Prostate gland (tissue), 2 donors: ENCODE measurements at regions of chr13 and their contacts with region 1.

Region 1: DNA sequence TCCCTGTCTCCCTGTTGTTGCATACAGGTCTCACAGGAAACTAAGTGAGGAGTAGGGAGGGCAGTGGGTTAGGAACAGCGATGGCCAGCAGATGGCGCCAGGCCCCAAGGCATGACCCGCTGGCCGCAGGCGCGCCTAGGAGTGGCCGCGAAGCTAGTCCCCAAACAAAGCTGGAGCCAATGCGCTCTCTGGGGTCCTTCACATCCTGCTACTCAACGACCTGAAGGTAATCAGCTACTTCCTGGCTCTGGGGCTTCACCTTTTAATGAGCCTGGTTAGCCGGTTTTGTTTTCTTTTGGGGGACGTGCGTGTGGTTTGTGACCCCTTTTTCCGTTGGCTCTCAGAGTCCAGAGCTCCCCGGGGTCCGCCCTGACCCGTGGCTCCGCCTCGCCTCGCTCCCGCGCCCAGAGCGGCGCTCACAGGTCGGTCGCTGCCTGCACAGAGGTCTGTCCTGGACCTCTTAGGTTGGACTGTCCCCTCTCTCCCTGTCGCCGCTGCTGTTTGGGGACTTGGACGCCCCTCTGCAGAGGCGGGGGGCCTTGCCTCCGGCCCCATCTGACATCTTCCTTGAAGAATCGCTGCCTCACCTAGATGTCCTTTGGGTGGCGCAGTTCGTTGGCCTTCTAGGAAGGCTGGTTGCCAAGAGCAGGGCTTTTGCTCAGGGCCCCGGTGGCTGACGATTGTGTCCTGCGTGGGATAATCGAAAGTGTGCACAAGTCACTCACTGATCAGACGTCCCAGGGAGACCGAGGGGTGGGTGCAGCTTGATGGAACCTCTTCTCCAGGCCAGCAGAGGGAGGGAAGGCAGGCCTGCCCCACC is 62.1 kb upstream of the GTF3A start:
- DNase-seq: peak; percentile 73
- H3K4me3 ChIP-seq: peak overlapping the region; percentile 16
- H3K27ac ChIP-seq: no peak overlapping the region
- H3K4me1 ChIP-seq: no peaks in the 10 kb centered on the region
- H3K27me3 ChIP-seq: no peaks in the 10 kb centered on the region
- CTCF ChIP-seq: peak; percentile 71 to 91 (median 79)
- POLR2A ChIP-seq: no peak

Region 2: DNA sequence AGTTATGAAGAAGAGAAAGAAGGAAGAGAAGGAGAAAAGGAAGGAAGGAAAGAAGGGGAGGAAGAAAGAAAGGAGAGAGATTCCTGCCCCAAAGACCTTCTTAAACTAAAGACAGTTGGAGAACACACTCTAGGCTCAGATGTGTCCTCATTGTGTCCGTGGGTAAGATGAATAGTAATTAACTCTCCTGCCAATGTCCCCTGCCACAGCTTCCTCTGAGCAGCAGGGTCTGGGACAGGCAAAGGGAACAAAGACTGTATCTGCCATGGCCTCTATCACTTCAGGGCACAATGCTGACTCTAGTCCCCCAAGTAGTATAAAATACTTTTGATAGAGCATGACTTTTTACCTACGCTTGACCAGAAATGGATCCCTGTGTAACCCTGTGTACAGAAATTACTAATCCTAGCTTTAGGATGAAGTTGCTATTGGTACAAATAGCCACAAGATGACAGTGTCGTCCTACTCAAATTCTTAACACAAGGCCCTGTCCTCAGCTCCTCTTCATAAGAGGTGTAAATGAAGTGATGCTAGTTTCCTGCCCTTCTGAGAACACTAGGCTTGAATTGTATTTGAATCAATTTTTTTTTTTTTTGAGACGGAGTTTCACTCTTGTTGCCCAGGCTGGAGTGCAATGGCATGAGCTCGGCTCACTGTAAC is 415.5 kb before region 1 on chr13:
- intact Hi-C with region 1: loop called (anchors 5 kb)
- DNase-seq: no peak
- H3K4me3 ChIP-seq: no peak overlapping the region
- H3K27ac ChIP-seq: no peak overlapping the region
- H3K4me1 ChIP-seq: no peaks in the 10 kb centered on the region
- H3K27me3 ChIP-seq: no peaks in the 10 kb centered on the region
- CTCF ChIP-seq: peak in 3 of 4 experiments; percentile 50 to 72 (median 66)
- POLR2A ChIP-seq: no peak

Region 3: DNA sequence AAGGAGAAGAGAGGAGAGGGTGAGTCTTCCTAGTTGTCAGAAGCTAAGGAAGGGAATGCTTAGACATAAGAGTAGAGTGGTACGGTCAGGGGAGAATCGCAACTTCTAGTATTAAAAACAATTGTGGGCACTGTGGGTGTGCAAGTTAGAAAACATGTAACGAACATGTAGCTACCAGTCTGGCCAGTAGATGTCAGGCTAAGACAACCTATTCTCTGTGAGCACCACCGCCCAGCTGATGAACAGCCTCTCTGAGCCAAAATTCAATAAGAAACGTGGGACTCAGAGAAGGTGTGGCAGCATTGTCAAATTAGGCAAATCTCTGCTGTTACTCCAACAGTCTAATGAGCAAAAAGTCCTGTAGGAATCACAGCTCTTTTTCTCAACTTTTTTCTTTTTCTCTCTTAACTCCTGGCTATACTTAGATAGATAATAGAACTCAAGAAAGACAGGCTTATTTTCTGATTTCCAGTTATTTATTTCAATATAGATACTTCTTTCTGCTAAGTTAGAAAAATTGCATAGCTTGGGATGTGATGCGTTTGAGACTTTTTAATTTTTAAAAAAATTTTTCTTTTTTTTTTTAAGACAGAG is 376.9 kb before region 1 on chr13:
- intact Hi-C with region 1: loop called (anchors 1 kb)
- DNase-seq: peak; percentile 81
- H3K4me3 ChIP-seq: no peak overlapping the region
- H3K27ac ChIP-seq: no peak overlapping the region
- H3K4me1 ChIP-seq: peaks cover 4% of the 10 kb centered on the region
- H3K27me3 ChIP-seq: no peaks in the 10 kb centered on the region
- CTCF ChIP-seq: peak; percentile 40 to 85 (median 82)
- POLR2A ChIP-seq: no peak

Region 4: GRCh38 chr13:27270594-27271520 is 91.4 kb before region 1 on chr13 and contains the start of gene RASL11A:
- intact Hi-C with region 1: loop called (anchors 5 kb)
- DNase-seq: peak; percentile 77
- H3K4me3 ChIP-seq: peak within 1 kb of the TSS; percentile 50 to 63
- H3K27ac ChIP-seq: peak within 1 kb of the TSS; percentile 78 to 84
- H3K4me1 ChIP-seq: peaks cover 2% of the 10 kb centered on the region
- H3K27me3 ChIP-seq: no peaks in the 10 kb centered on the region
- CTCF ChIP-seq: peak; percentile 75 to 92 (median 78)
- POLR2A ChIP-seq: peak; percentile 81
- total RNA-seq, gene RASL11A: 26.5 to 31.5 TPM

Region 5: DNA sequence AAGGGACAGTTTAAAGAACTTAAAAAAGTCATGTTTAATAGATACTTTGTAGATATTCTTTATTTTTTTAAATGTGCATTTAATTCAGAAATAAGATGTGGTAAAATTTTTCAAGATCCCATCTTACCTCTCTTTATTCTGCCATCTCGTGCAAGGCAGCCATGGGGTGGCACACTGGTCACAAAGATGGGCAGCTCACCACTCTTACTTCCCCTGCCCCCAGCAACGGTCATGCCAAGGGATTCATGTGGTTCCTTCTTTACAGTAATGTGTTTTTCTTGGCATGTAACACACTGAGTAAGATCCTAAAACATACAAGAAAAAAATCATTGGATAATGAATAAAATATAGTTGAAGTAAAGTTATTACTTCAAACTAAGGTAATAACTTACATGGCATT is 193.8 kb after region 1 on chr13:
- intact Hi-C with region 1: no loop called
- DNase-seq: no peak
- H3K4me3 ChIP-seq: no peak overlapping the region
- H3K27ac ChIP-seq: no peak overlapping the region
- H3K4me1 ChIP-seq: no peaks in the 10 kb centered on the region
- H3K27me3 ChIP-seq: no peaks in the 10 kb centered on the region
- CTCF ChIP-seq: peak in 1 of 4 experiments; percentile 31
- POLR2A ChIP-seq: no peak

Region 6: GRCh38 chr13:27977476-27978300 is 615.4 kb after region 1 on chr13:
- intact Hi-C with region 1: loop called (anchors 5 kb)
- DNase-seq: no peak
- H3K4me3 ChIP-seq: no peak overlapping the region
- H3K27ac ChIP-seq: no peak overlapping the region
- H3K4me1 ChIP-seq: no peaks in the 10 kb centered on the region
- H3K27me3 ChIP-seq: peaks cover 69% of the 10 kb centered on the region
- CTCF ChIP-seq: no peak
- POLR2A ChIP-seq: no peak